GM10248 (cell line): ENCODE measurements at regions of chr21 and their contacts with region 1.

Region 1: GRCh38 chr21:32826329-32827167 is 55.0 kb upstream of the PAXBP1 start:
- DNase-seq: peak; percentile 72
- CTCF ChIP-seq: peak; percentile 70

Region 2: DNA sequence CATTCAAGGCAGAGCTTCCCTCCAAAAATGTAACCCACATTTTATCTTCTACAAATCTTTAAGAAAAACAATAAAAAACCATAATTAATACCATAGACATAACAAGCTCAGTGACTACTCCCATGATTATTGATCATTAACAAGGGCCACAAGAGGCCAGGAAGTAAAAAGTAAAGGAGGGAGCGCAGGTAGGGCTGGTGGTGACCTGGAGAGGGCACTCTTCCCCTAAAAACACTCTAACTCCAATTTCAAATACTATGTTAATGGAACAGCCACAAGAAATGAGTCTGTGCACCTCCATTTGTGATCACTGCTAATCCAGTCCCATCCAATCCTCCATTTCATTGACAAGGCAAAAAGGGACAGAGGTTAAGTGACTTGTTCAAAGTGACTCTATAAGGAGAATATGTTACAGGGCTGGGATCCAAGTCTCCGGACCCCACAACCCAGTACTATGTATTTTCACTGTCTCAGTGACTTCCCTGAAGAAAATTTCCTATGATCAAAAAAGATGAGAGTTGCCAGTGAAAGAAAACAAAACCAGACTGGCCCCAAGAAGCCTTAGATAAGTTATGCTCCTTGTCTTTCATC is 173.1 kb before region 1 on chr21:
- CTCF ChIA-PET with region 1: interaction called, 12 read pairs
- POLR2A ChIA-PET with region 1: no interaction called
- DNase-seq: peak; percentile 55
- CTCF ChIP-seq: peak; percentile 66

Region 3: DNA sequence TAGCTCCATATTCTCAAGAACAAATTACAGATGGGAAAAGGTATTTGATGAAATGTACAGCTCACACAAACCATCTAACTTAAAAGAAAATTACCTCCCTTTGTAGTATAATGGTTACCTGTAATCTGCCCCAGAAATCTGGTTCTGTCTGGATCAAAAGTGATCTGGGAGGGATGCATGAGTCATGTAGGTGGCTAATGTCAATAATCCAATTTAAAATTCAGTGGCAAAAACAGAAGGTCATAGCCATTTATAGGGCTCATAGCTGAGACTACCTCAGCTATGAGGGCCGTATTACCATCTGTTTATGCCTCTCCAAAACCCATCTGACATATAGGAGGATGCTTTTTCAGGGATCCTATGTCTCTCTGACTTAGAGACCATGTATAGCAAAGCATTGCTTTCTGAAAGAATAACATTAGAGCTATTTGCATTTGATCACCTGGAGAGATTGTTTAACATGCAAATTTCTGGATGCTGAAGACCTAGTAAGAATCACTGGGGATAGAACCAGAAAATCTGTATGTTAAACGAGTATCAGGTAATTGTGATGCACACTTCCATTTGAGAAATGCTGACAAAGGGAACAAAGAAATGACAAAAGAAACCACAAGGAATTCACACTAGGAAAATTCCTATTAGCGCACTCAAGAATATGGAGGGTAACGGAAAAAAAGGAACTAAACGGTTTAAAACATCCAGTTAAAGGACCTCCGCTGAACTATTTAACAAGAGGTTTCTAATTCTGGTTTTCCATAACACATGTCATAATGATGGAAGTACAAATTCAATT is 72.5 kb before region 1 on chr21:
- CTCF ChIA-PET with region 1: interaction called, 13 read pairs
- POLR2A ChIA-PET with region 1: no interaction called
- DNase-seq: no peak
- CTCF ChIP-seq: no peak

Region 4: GRCh38 chr21:32800056-32800455 is 26.5 kb before region 1 on chr21:
- CTCF ChIA-PET with region 1: interaction called, 10 read pairs
- POLR2A ChIA-PET with region 1: no interaction called
- DNase-seq: no peak
- CTCF ChIP-seq: no peak

Region 5: GRCh38 chr21:32813265-32813903 is 13.2 kb before region 1 on chr21:
- CTCF ChIA-PET with region 1: interaction called, 45 read pairs
- POLR2A ChIA-PET with region 1: no interaction called
- DNase-seq: peak; percentile 21
- CTCF ChIP-seq: no peak